Caco-2 (cell line): ENCODE measurements at regions of chr11 and their contacts with region 1.

Region 1: DNA sequence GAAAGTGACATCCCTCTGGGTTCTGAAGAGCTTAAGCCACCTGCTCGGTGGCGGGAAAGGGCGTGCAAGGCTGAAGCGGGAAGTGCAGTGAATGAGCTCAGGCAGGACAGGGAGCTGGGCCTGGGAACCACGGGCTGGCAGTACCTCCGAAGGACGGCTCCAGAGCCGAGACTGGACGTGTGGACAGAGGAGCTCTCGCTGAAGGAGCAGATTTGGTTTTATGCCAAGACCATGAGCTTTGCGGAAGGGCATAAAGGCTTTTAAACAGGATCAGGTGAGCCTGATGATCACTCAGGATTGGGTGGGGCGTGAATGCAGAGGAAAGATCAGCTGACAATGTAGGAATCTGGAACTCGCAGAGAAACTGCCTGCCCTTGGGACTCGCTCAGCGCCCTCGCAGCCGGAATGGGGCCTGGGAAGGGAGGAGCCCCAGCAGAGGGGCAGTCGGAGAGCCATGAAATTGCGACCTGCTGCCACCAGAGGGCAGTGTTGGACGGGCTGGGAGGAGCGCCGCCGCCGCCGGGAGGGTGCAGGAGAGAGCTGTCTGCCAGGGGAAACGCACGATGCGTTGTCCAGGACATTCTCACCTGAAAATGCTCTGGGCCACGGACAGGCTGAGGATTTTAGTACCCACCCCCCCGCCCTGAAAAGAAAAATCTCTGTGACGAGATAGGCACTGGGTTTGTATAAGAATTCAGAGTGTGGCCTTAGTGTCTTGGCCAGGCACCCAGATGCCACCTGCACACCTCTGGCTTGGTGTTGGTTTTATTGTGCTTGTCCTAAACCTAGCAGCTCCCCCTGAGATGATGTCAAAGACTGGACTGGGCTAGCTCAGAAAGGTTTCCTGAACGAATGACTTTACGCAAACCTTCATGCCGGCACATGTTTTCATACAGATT is 324.4 kb downstream of the NTM start:
- DNase-seq: peak; percentile 84 to 90
- H3K4me3 ChIP-seq: no peak overlapping the region
- H3K4me3 Mint-ChIP-seq: peak overlapping the region; percentile 24
- H3K27ac Mint-ChIP-seq: no peak overlapping the region
- H3K4me1 ChIP-seq: no peaks in the 10 kb centered on the region
- H3K4me1 Mint-ChIP-seq: peaks cover 6% of the 10 kb centered on the region
- H3K27me3 ChIP-seq: no peaks in the 10 kb centered on the region
- H3K27me3 Mint-ChIP-seq: peaks cover 24% of the 10 kb centered on the region
- CTCF ChIP-seq: peak; percentile 98 to 99

Region 2: DNA sequence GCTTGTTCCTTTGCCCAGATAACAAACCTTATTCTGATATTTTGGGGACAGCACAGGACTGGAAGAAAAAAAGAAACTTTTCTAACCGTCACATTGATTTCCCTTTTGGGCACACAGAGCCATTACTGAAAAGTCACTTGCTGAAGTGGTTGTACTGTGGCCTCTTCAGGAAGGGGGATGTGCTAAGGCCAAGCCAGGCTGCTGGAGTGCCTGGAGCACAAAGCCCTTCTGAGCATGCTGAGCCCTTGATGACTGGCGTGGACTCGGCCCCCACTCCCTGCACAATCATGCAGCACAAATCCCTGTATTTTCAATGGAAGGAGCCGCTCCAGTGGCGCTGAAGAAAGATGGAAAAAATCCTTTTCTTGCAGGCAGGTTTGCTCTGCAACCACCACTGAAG is 160.2 kb before region 1 on chr11:
- CTCF ChIA-PET with region 1: no interaction called
- POLR2A ChIA-PET with region 1: no interaction called
- intact Hi-C with region 1: no loop called
- DNase-seq: no peak
- H3K4me3 ChIP-seq: no peak overlapping the region
- H3K4me3 Mint-ChIP-seq: no peak overlapping the region
- H3K27ac Mint-ChIP-seq: no peak overlapping the region
- H3K4me1 ChIP-seq: no peaks in the 10 kb centered on the region
- H3K4me1 Mint-ChIP-seq: no peaks in the 10 kb centered on the region
- H3K27me3 ChIP-seq: no peaks in the 10 kb centered on the region; the same call in none of the 2 replicates
- H3K27me3 Mint-ChIP-seq: peaks cover 25% of the 10 kb centered on the region
- CTCF ChIP-seq: no peak

Region 3: GRCh38 chr11:132028380-132029240 is 333.8 kb after region 1 on chr11:
- CTCF ChIA-PET with region 1: no interaction called
- POLR2A ChIA-PET with region 1: no interaction called
- intact Hi-C with region 1: loop called (anchors 2 kb)
- DNase-seq: peak; percentile 53 to 55
- H3K4me3 ChIP-seq: no peak overlapping the region
- H3K4me3 Mint-ChIP-seq: no peak overlapping the region
- H3K27ac Mint-ChIP-seq: no peak overlapping the region
- H3K4me1 ChIP-seq: no peaks in the 10 kb centered on the region
- H3K4me1 Mint-ChIP-seq: no peaks in the 10 kb centered on the region
- H3K27me3 ChIP-seq: no peaks in the 10 kb centered on the region
- H3K27me3 Mint-ChIP-seq: peaks cover 6% of the 10 kb centered on the region
- CTCF ChIP-seq: peak; percentile 58 to 71